Activated T-helper 1 cell treated with anti-CD3 and anti-CD28 coated beads, Interleukin-12 subunit alpha, Interleukin-12 subunit beta, Interleukin-2, Interleukin-4 antibody, amounts not matched to agents 30 ng/mL and 10 ng/mL and 1 ng/mL, durations not matched to agents 14 hours and 24 hours and 36 hours (primary cell): ENCODE measurements at regions of chrX and their contacts with region 1.

Region 1: GRCh38 chrX:125791781-125792180 is 374.3 kb downstream of the DCAF12L2 start:
- DNase-seq: no peak
- H3K4me3 Mint-ChIP-seq: no peak overlapping the region
- H3K27ac Mint-ChIP-seq: no peak overlapping the region
- H3K4me1 Mint-ChIP-seq: no peaks in the 10 kb centered on the region
- H3K27me3 Mint-ChIP-seq: no peaks in the 10 kb centered on the region

Region 2: DNA sequence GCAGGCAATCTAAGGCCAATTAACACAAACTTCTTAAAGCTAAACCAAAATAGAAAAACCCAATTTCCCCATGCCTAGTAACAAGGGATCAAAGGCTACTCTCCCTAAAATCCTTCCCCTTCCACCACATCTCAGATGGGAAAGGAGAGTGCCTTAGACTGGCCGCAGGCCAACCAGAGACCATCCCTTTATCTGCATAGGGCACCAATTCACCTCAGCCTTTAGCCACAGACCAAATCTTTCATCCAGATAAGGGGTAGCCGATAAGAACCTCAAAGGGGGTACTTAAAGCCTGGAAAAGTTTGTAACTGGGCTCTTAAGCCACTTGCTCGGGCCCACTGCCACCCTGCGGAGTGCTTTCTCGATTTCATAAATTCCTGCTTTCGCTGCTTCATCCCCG is 403.8 kb before region 1 on chrX:
- intact Hi-C with region 1: loop called (anchors 10 kb)
- DNase-seq: no peak
- H3K4me3 Mint-ChIP-seq: no peak overlapping the region
- H3K27ac Mint-ChIP-seq: no peak overlapping the region
- H3K4me1 Mint-ChIP-seq: no peaks in the 10 kb centered on the region
- H3K27me3 Mint-ChIP-seq: no peaks in the 10 kb centered on the region

Region 3: DNA sequence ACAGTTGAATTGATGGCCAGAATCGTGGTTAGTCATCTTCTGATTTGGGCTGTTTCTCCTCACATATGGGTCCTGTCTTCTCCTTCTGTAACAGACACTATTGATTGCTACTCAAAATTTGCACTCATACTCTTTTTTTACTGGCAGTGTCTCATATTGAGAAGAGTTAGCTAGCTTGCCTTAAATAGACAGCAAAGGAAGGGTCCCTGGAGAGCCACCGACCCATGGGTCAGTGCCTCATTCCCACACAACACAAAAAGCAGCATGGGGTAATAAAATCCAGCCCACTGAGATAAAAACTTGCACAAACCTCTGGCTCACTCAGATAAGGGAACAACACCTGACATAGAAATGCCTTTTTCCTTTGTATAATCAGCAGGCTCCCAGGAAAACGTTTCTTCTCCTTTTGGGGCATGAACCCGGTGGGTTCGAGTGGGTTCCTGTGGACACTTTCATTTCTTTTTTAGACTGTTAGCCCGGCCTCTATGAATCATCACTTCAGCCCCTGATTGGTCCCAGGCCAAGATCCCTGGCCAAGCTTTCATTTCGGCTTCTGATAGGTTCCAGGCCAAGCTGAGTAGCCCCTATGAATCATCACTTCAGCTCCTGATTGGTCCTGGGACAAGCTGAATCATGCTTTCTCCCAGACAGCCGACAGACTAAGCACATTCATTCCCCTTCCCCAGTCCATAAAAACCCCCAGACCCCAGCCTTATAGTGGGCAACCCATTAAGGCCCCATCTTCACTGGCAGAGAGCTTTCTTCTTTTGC is 33.8 kb before region 1 on chrX:
- intact Hi-C with region 1: no loop called
- DNase-seq: no peak
- H3K4me3 Mint-ChIP-seq: no peak overlapping the region
- H3K27ac Mint-ChIP-seq: no peak overlapping the region
- H3K4me1 Mint-ChIP-seq: no peaks in the 10 kb centered on the region
- H3K27me3 Mint-ChIP-seq: no peaks in the 10 kb centered on the region